Panc1 (cell line): ENCODE measurements at regions of chr11 and their contacts with region 1.

Region 1: GRCh38 chr11:115334932-115335788 is 169.1 kb downstream of the CADM1 start:
- DNase-seq: no peak
- ATAC-seq: no peak
- H3K4me3 ChIP-seq: no peak overlapping the region
- H3K27ac ChIP-seq: no peak overlapping the region
- H3K4me1 ChIP-seq: no peaks in the 10 kb centered on the region
- H3K27me3 ChIP-seq: peaks cover 7% of the 10 kb centered on the region; the same call in 1 of the 2 replicates
- CTCF ChIP-seq: peak; percentile 77; the same call in 1 of the 2 replicates

Region 2: DNA sequence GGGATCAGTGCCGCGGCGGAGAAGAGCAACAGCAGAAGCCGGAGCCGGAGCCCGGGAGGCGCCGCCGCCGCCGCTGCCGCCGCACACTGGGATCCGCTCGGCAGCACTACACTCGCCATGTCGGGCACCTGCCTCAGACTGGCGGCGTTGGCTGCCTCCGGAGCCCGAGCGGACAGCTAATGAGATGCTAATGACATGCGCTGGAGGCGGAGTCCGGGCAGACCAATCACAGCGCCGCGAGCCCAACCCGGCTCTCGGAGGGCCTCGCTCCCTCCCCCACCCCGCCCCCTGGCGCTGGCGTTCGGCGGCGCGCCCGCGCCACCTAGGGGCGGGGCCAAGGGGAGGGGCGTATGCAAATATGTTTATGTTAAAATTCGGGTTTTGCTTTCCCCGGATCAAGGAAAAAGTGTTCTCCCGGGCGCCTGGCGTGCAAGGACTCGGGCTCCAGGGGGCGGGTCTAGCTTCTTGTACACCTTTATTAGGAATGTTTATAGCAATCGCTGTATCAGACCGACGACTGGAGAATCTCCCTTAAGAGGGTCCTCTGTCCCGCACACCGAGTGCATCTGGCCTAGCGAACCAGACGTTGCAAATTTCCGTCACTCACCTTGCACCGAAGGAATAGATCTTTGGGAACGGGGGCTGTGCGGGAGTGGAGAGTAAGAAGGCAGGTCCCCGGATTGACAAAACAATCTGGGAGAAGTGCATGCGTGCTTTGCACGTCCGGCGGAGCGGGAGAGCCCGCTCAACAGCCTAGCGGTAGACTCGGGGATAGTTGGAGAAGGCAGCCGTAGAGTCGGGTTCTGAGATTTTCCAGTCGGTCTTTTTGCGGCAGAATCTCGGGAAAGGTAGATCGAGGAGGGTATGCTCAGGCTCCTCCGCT is 169.4 kb after region 1 on chr11 and contains the start of gene CADM1:
- CTCF ChIA-PET with region 1: no interaction called
- POLR2A ChIA-PET with region 1: no interaction called
- in situ Hi-C with region 1: no loop called
- intact Hi-C with region 1: loop called (anchors 5 kb)
- DNase-seq: peak; percentile 46
- ATAC-seq: peak; percentile 84
- H3K4me3 ChIP-seq: peak within 1 kb of the TSS; percentile 59 to 81
- H3K27ac ChIP-seq: no peak within 1 kb of the TSS
- H3K4me1 ChIP-seq: peaks cover 10% of the 10 kb centered on the region; the same call in 1 of the 2 replicates
- H3K27me3 ChIP-seq: peaks cover 24% of the 10 kb centered on the region
- CTCF ChIP-seq: peak; percentile 78
- total RNA-seq, gene CADM1: 3.9 TPM

Region 3: GRCh38 chr11:115678942-115679341 is 343.8 kb after region 1 on chr11:
- CTCF ChIA-PET with region 1: no interaction called
- POLR2A ChIA-PET with region 1: no interaction called
- in situ Hi-C with region 1: no loop called
- intact Hi-C with region 1: loop called (anchors 5 kb)
- DNase-seq: no peak
- ATAC-seq: no peak
- H3K4me3 ChIP-seq: no peak overlapping the region
- H3K27ac ChIP-seq: no peak overlapping the region
- H3K4me1 ChIP-seq: no peaks in the 10 kb centered on the region
- H3K27me3 ChIP-seq: no peaks in the 10 kb centered on the region
- CTCF ChIP-seq: no peak

Region 4: DNA sequence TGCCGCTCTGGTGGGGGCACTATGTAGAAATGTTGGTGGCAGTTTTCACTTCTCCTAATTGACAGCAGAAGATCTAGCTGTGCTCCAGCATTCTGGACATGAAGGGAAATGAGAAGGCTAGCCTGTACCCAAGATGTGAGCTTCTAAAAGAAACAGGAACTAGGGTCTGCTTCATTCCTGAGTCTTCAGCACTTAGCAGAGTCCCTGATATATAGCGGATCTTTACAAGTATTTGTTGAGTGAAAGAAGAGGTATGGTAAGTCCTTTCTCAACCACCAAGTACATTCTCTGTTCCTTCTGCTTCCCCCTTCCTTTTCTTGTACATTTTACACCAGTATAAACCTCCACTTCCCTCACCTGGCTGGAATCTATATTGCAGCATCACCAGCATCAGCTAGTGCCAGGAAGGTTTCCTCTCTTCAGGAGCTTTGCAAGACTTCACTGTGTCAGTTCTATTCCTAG is 577.4 kb after region 1 on chr11:
- CTCF ChIA-PET with region 1: no interaction called
- POLR2A ChIA-PET with region 1: no interaction called
- in situ Hi-C with region 1: no loop called
- intact Hi-C with region 1: loop called (anchors 10 kb)
- DNase-seq: no peak
- ATAC-seq: peak; percentile 58; the same call in 1 of the 2 replicates
- H3K4me3 ChIP-seq: no peak overlapping the region
- H3K27ac ChIP-seq: no peak overlapping the region
- H3K4me1 ChIP-seq: no peaks in the 10 kb centered on the region
- H3K27me3 ChIP-seq: 0 out of 2 replicates have a peak, but pooled peaks cover 2% of the 10 kb centered on the region
- CTCF ChIP-seq: peak; percentile 45

Region 5: DNA sequence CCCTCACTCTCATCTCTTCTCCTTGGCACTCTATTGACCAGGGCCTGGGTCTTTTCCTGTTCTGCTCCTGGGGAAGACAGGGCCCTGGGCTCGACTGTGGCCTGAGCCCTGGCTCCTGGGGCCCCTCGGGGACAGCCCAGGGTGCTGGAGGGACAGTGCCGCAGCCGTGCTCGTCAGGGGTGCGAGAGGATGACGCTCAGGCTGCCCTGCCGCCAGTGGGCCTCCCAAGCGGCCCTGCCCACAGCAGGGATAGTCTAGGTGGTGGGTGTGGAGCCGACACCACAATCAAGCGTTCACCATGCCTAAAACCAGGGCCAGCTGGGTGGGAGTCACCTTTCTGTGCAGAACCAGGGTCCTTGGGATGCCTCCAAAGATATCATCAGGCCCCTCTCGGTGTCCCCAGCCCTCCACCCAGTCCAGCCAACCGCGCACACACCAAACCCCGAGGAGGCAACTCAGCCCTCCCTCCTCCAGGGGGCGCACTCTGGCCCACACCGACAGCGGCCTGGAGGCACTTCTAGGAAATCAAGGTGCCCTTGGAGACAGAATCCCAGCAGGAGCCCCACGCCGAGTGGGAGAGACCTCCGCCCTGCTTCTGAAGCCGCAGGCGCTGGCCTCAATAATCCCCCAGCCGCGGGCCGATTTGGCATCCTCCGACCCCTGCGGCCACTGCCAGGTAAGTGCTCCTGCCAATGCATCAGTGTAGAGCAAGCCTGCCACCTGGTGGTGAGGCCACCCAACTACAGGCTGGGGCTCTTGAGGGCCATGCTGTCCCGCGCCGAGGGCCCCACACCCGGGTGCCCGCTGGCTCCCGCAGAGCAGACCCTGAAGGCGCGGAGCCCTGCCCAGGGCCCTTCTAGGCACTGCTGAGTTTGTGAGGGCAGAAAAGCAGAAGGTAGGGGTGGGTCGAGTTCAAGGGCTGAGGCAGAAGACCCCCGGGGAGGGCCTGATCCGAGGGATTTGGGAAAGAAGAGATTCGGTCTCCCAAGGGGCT is 941.2 kb after region 1 on chr11:
- CTCF ChIA-PET with region 1: no interaction called
- POLR2A ChIA-PET with region 1: no interaction called
- in situ Hi-C with region 1: no loop called
- intact Hi-C with region 1: loop called (anchors 5 kb)
- DNase-seq: peak; percentile 28
- ATAC-seq: peak; percentile 95
- H3K4me3 ChIP-seq: no peak overlapping the region
- H3K27ac ChIP-seq: no peak overlapping the region
- H3K4me1 ChIP-seq: 0 out of 2 replicates have a peak, but pooled peaks cover 2% of the 10 kb centered on the region
- H3K27me3 ChIP-seq: no peaks in the 10 kb centered on the region; the same call in 1 of the 2 replicates
- CTCF ChIP-seq: peak; percentile 98